Endothelial cell of umbilical vein (primary cell): ENCODE measurements at regions of chr12 and their contacts with region 1.

Region 1: DNA sequence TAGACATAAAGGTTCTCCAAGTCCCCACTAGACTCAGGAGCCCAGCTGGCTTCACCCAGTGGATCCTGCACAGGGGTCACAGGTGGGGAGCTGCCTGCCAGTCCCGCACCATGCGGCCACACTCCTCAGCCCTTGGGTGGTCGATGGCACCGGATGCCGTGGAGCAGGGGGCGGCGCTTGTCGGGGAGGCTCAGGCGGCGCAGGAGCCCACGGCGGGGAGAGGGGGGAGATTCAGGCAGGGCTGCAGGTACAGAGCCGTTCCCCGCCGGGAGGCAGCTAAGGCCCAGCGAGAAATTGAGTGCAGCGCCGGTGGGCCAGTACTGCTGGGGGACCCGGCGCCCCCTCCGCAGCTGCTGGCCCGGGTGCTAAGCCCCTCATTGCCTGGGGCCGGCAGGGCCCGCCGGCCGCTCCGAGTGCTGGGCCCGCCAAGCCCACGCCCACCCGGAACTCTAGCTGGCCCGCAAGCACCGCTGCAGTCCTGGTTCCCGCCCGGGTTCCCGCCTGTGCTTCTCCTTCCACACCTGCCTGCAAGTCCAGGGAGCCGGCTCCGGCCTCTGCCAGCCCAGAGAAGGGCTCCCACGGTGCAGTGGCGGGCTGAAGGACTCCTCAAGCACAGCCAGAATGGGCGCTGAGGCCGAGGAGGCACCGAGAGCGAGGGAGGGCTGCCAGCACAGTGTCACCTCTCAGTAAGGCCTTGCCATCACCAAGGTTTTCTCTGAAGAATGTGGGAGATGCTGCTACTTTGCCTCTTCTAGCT is 58.4 kb upstream of the PPP1R12A start:
- DNase-seq: no peak
- H3K4me3 ChIP-seq: no peak overlapping the region
- H3K27ac ChIP-seq: no peak overlapping the region
- H3K4me1 ChIP-seq: no peaks in the 10 kb centered on the region
- H3K27me3 ChIP-seq: peaks cover 0 to 4% of the 10 kb centered on the region in 2 experiments
- CTCF ChIP-seq: no peak
- POLR2A ChIP-seq: no peak

Region 2: GRCh38 chr12:79818856-79819255 is 174.4 kb before region 1 on chr12:
- CTCF ChIA-PET with region 1: no interaction called
- POLR2A ChIA-PET with region 1: no interaction called
- dilution Hi-C with region 1: no loop called
- intact Hi-C with region 1: no loop called
- DNase-seq: peak; percentile 84
- H3K4me3 ChIP-seq: no peak overlapping the region
- H3K27ac ChIP-seq: no peak overlapping the region
- H3K4me1 ChIP-seq: peaks cover 6% of the 10 kb centered on the region
- H3K27me3 ChIP-seq: no peaks in the 10 kb centered on the region
- CTCF ChIP-seq: no peak
- POLR2A ChIP-seq: no peak

Region 3: DNA sequence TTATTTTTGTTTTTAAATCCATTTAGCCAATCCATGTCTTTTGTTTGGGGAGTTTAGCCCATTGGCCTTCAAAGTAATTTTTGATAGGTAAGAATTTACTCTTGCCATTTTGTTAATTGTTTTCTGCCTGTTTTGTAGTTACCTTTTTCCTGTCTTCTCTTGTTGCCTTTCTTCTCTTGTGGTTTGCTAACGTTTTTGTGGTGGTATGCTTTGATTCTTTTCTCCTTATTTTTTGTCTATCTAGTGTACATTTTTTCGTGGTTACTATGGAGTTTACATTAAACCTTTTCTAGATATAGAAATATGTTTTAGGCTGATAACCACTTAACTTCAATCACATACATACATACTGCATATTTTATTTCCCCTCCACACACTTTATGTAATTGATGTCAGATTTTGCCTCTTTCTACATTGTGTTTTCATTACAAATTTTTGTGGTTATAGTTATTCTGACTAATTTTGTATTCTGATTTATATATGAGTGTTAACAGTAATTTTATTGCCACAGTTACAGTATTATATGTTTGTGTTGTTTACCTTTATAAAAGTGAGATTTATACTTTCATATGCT is 39.2 kb before region 1 on chr12:
- CTCF ChIA-PET with region 1: no interaction called
- POLR2A ChIA-PET with region 1: no interaction called
- dilution Hi-C with region 1: no loop called
- intact Hi-C with region 1: loop called (anchors 5 kb)
- DNase-seq: no peak
- H3K4me3 ChIP-seq: no peak overlapping the region
- H3K27ac ChIP-seq: no peak overlapping the region
- H3K4me1 ChIP-seq: no peaks in the 10 kb centered on the region
- H3K27me3 ChIP-seq: no peaks in the 10 kb centered on the region
- CTCF ChIP-seq: no peak
- POLR2A ChIP-seq: no peak